CD4-positive, alpha-beta T cell (primary cell): ENCODE measurements at regions of chr12 and their contacts with region 1.

Region 1: GRCh38 chr12:47276621-47277309 is 197.0 kb upstream of the AMIGO2 start:
- DNase-seq: peak; percentile 26 to 94 (median 50)
- ATAC-seq: peak; percentile 96
- H3K4me3 ChIP-seq: no peak overlapping the region
- H3K4me3 Mint-ChIP-seq: peak overlapping the region; percentile 61
- H3K27ac ChIP-seq: peak overlapping the region; percentile 72 to 81
- H3K27ac Mint-ChIP-seq: peak overlapping the region; percentile 90
- H3K4me1 ChIP-seq: peaks cover 40% of the 10 kb centered on the region
- H3K4me1 Mint-ChIP-seq: peaks cover 83% of the 10 kb centered on the region
- H3K27me3 ChIP-seq: no peaks in the 10 kb centered on the region
- H3K27me3 Mint-ChIP-seq: no peaks in the 10 kb centered on the region
- CTCF ChIP-seq: no peak

Region 2: DNA sequence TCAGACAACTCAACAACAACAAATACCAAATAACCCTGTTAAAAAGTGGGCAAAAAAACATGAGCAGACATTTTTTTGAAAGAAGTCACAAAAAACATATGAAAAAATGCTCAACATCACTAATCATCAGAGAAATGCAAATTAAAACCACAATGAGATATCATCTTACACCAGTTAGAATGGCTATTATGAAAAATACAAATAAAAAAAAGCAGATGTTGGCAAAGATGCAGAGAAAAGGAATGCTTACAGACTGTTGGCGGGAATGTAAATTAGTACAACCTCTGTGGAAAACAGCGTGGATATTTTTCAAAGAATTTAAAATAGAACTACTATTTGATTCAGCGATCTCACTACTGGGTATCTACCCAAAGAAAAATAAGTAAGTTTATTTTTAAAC is 565.0 kb before region 1 on chr12:
- CTCF ChIA-PET with region 1: no interaction called
- POLR2A ChIA-PET with region 1: no interaction called
- intact Hi-C with region 1: no loop called
- DNase-seq: no peak
- ATAC-seq: no peak
- H3K4me3 ChIP-seq: no peak overlapping the region
- H3K4me3 Mint-ChIP-seq: no peak overlapping the region
- H3K27ac ChIP-seq: no peak overlapping the region
- H3K27ac Mint-ChIP-seq: no peak overlapping the region
- H3K4me1 ChIP-seq: no peaks in the 10 kb centered on the region
- H3K4me1 Mint-ChIP-seq: no peaks in the 10 kb centered on the region
- H3K27me3 ChIP-seq: no peaks in the 10 kb centered on the region
- H3K27me3 Mint-ChIP-seq: no peaks in the 10 kb centered on the region
- CTCF ChIP-seq: no peak

Region 3: DNA sequence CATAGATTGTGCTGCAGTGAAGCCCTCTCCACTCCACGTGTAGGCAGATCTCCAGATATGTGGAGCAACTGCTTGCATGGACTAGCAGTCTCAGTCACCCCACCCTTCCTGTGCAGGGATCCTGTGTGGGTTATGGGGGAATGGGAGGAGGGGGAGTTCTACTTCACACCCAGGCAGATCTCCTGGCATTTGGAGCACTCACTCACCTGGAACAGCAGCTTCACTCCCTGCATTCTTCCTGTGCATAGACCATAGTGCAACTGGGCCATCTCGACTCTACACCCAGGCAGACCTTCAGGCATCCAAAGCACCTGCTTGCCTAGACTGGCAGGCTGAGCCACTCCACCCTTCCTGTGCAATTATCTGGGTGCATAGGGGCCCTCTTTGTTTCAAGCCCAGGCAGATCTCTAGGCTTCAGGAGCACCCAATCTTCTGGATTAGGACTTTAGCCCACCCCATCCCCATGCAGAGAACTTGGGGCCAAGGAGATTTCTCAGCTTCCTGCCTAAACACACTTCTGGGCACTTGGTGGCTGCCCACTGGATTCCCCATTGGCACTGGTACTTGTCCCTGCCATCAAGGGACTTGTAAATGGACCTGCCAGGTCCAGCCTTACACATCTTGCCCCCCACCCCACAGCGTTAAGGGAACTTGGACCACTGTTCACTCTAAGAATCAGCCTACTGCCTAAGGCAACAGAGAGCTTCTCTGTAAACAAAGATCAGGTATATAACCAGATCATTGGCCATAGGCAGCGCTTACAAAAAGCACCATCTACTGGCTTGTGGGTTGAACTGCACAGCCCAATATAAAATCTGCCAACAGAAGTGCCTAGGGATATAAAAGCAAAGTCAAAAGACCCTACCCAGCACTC is 293.1 kb before region 1 on chr12:
- CTCF ChIA-PET with region 1: no interaction called
- POLR2A ChIA-PET with region 1: no interaction called
- intact Hi-C with region 1: no loop called
- DNase-seq: peak in 12 of 14 experiments; percentile 2 to 60 (median 18)
- ATAC-seq: peak; percentile 74
- H3K4me3 ChIP-seq: no peak overlapping the region
- H3K4me3 Mint-ChIP-seq: no peak overlapping the region
- H3K27ac ChIP-seq: no peak overlapping the region
- H3K27ac Mint-ChIP-seq: no peak overlapping the region
- H3K4me1 ChIP-seq: peaks cover 10% of the 10 kb centered on the region
- H3K4me1 Mint-ChIP-seq: peaks cover 7% of the 10 kb centered on the region
- H3K27me3 ChIP-seq: peaks cover 2 to 7% of the 10 kb centered on the region in 2 experiments
- H3K27me3 Mint-ChIP-seq: peaks cover 20% of the 10 kb centered on the region
- CTCF ChIP-seq: peak; percentile 53

Region 4: GRCh38 chr12:47190271-47190750 is 86.5 kb before region 1 on chr12:
- CTCF ChIA-PET with region 1: interaction called, 7 read pairs
- POLR2A ChIA-PET with region 1: interaction called, 14 read pairs
- intact Hi-C with region 1: no loop called
- DNase-seq: peak in 1 of 14 experiments; percentile 37
- ATAC-seq: no peak
- H3K4me3 ChIP-seq: no peak overlapping the region
- H3K4me3 Mint-ChIP-seq: no peak overlapping the region
- H3K27ac ChIP-seq: peak overlapping the region; percentile 14 to 16
- H3K27ac Mint-ChIP-seq: peak overlapping the region; percentile 87
- H3K4me1 ChIP-seq: peaks cover 63% of the 10 kb centered on the region
- H3K4me1 Mint-ChIP-seq: peaks cover 90% of the 10 kb centered on the region
- H3K27me3 ChIP-seq: no peaks in the 10 kb centered on the region
- H3K27me3 Mint-ChIP-seq: no peaks in the 10 kb centered on the region
- CTCF ChIP-seq: no peak

Region 5: GRCh38 chr12:47302111-47302671 is 25.4 kb after region 1 on chr12:
- CTCF ChIA-PET with region 1: interaction called, 3 read pairs
- POLR2A ChIA-PET with region 1: interaction called, 38 read pairs
- intact Hi-C with region 1: loop called in 1 of 2 experiments (anchors 2 kb)
- DNase-seq: no peak
- ATAC-seq: no peak
- H3K4me3 ChIP-seq: no peak overlapping the region
- H3K4me3 Mint-ChIP-seq: no peak overlapping the region
- H3K27ac ChIP-seq: no peak overlapping the region
- H3K27ac Mint-ChIP-seq: peak overlapping the region; percentile 62
- H3K4me1 ChIP-seq: peaks cover 25% of the 10 kb centered on the region
- H3K4me1 Mint-ChIP-seq: peaks cover 62% of the 10 kb centered on the region
- H3K27me3 ChIP-seq: no peaks in the 10 kb centered on the region
- H3K27me3 Mint-ChIP-seq: no peaks in the 10 kb centered on the region
- CTCF ChIP-seq: no peak

Region 6: DNA sequence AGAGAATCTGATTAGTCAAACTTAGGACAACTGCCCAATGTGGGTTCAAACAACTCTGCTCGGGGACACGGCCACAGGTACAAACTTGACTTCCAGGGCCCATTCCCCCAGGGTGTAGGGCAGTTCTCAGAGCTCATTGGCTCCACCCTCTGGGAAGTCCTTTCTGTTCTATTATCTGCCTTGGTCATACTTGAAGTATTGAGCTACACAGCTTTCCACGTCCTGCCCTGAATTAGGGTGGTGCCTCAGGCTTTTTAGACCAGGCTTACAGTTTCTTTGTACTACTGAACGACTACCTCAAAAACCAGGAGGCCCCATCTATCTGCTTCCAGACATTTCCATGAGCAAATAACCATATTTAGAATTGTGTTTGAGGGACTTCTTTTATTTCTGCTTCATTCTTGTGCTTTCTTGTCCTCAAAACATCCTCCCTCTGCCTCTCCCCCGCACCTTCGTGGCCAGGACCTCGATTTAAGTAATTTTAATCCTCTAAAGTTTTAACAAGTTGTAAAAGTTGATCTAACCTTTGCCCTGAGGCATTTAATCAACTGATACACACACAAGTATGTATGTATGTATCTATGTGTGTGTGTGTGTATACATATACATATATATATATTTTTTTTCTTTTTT is 84.7 kb after region 1 on chr12:
- CTCF ChIA-PET with region 1: no interaction called
- POLR2A ChIA-PET with region 1: interaction called, 6 read pairs
- intact Hi-C with region 1: loop called in 1 of 2 experiments (anchors 2 kb)
- DNase-seq: peak in 11 of 14 experiments; percentile 3 to 74 (median 37)
- ATAC-seq: peak; percentile 41
- H3K4me3 ChIP-seq: peak overlapping the region; percentile 40
- H3K4me3 Mint-ChIP-seq: peak overlapping the region; percentile 86
- H3K27ac ChIP-seq: peak overlapping the region; percentile 67 to 75
- H3K27ac Mint-ChIP-seq: peak overlapping the region; percentile 98
- H3K4me1 ChIP-seq: peaks cover 56% of the 10 kb centered on the region
- H3K4me1 Mint-ChIP-seq: peaks cover 65% of the 10 kb centered on the region
- H3K27me3 ChIP-seq: no peaks in the 10 kb centered on the region
- H3K27me3 Mint-ChIP-seq: no peaks in the 10 kb centered on the region
- CTCF ChIP-seq: no peak

Region 7: GRCh38 chr12:47419497-47419896 is 142.7 kb after region 1 on chr12:
- CTCF ChIA-PET with region 1: no interaction called
- POLR2A ChIA-PET with region 1: no interaction called
- intact Hi-C with region 1: no loop called
- DNase-seq: no peak
- ATAC-seq: no peak
- H3K4me3 ChIP-seq: no peak overlapping the region
- H3K4me3 Mint-ChIP-seq: no peak overlapping the region
- H3K27ac ChIP-seq: no peak overlapping the region
- H3K27ac Mint-ChIP-seq: no peak overlapping the region
- H3K4me1 ChIP-seq: peaks cover 7% of the 10 kb centered on the region
- H3K4me1 Mint-ChIP-seq: peaks cover 10% of the 10 kb centered on the region
- H3K27me3 ChIP-seq: no peaks in the 10 kb centered on the region
- H3K27me3 Mint-ChIP-seq: no peaks in the 10 kb centered on the region
- CTCF ChIP-seq: no peak